ENCODE measurements at regions of chr20 and their contacts with region 1.

Region 1: DNA sequence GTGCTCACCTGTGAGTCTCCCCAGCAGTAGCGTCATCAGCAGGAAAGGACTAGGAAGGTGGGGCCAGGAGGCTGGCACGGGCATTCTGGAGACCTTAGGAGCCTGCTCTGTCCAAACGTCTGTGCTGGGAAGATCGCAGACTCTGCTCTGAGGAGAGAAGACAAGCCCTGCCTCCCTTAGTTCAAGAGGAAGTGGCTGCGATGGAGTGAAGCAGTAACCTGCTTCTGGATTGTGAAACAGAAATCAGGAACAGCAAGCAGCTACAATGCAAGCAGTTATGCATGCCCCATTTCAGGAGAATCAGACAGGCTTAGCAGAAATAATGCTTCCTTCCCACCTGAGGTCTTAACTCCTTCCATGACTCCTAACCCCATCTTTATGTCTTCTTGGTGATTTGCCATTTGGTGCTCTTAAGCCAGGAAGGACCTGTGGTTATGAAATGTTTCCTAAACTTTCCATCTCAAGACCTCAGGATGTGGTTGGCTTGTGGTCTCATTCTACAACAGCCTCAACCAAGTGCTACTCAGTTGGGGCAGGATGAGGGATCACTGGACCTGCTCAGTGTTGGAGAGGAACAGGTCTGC is at the start of gene SIRPB1:
- DNase-seq: no peak
- H3K4me3 Mint-ChIP-seq: no peak within 1 kb of the TSS
- H3K27ac Mint-ChIP-seq: no peak within 1 kb of the TSS
- H3K4me1 Mint-ChIP-seq: peaks cover 51% of the 10 kb centered on the region
- H3K27me3 Mint-ChIP-seq: no peaks in the 10 kb centered on the region
- total RNA-seq, gene SIRPB1: 0.67 and 1.6 TPM in 2 replicates

Region 2: GRCh38 chr20:1663917-1664316 is 44.0 kb after region 1 on chr20:
- intact Hi-C with region 1: loop called (anchors 2 kb)
- DNase-seq: no peak
- H3K4me3 Mint-ChIP-seq: peak overlapping the region; percentile 11
- H3K27ac Mint-ChIP-seq: peak overlapping the region; percentile 79
- H3K4me1 Mint-ChIP-seq: peaks cover 82% of the 10 kb centered on the region
- H3K27me3 Mint-ChIP-seq: no peaks in the 10 kb centered on the region

Measured in activated T-helper 2 cell treated with anti-CD3 and anti-CD28 coated beads, Interferon-gamma antibody, Interleukin-2, Interleukin-4, amounts not matched to agents 10 μg/mL and 5 μg/mL and 100 μg/mL, durations not matched to agents 14 hours and 24 hours and 36 hours (primary cell).